ENCODE measurements at regions of chr15 and their contacts with region 1.

Region 1: DNA sequence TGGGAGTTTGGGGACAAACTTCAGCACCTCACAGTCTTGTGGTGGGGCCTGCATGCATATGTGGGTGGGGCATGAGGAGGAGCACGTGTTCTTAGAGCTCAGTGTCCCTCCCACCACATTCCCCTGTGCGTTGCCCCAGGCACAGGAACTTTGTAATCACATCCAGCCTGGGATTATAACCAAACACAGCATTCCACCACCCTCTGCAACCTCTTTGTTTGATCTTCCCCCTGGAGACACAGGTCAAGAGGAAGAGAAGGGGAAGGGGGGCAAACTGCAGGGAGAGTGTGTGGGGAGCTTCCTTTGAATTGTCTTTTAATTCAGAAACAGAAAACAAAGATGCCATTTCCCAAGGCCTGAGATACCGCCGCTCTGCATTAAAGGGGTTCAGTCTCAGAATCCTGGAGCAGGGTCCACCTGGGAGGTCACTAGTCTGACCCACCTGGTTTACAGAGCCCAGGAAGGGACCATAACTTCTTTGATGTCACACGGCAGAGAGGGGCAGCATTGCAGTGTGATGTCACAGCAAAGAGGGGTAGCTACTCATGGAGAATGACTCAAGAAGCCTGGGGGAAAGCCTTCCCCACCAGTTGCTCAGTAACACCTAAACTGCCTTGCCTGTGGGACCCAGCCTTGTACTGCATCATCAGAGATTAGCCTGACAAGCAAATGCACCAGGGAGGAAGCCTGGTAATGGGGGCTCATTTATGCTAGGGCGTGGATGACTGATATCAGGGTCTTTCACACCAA is 106.3 kb upstream of the RNU6-1 start:
- DNase-seq: peak; percentile 92 to 97
- H3K4me3 ChIP-seq: 0 out of 2 replicates have a peak overlapping the region, but pooled peaks have one; percentile 0
- H3K4me3 Mint-ChIP-seq: peak overlapping the region; percentile 83
- H3K27ac Mint-ChIP-seq: peak overlapping the region; percentile 99
- H3K4me1 ChIP-seq: peaks cover 58% of the 10 kb centered on the region
- H3K4me1 Mint-ChIP-seq: peaks cover 37% of the 10 kb centered on the region
- H3K27me3 ChIP-seq: no peaks in the 10 kb centered on the region
- H3K27me3 Mint-ChIP-seq: no peaks in the 10 kb centered on the region
- CTCF ChIP-seq: no peak

Region 2: DNA sequence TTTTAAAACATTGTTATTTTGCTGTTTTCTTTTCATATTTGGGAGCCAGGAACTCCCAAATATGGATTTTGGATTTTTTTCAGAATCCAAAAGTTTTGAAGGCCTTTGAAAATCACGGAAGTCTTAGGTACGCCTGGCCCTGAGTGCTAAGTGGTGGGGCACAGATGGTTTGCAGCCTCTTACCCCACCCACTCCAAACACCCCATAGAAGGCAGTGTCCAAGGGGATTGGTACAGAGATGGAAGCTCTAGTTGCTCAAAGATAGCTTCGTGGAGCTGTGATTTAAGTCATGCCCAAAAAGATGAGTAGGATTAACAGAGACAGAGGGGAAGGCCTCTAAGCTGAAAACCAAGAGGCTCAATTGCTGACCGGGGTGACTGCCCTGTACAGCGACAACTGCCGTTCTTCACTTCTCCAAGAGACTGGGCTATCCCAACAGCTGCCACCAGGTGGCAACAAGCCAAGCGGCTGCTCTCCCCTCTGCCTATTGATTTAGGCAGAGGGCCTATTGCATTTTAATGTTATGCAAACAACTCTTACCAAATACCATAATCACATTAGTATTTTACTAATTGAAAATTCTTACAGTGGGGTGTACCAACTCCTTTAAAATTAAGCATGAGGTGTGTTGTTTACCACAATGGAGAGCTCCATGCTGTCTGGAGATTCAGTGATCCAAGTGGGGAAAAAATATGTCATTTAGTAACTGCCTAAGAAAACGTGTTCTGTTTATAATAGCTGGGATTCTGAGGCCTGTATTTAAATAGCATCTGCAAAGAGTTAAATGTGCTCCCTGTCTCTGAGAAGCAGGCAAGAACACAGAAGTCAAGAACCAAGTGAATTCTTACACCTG is 489.2 kb before region 1 on chr15:
- CTCF ChIA-PET with region 1: no interaction called
- POLR2A ChIA-PET with region 1: no interaction called
- intact Hi-C with region 1: no loop called
- DNase-seq: peak; percentile 67 to 84
- H3K4me3 ChIP-seq: no peak overlapping the region
- H3K4me3 Mint-ChIP-seq: no peak overlapping the region
- H3K27ac Mint-ChIP-seq: no peak overlapping the region
- H3K4me1 ChIP-seq: no peaks in the 10 kb centered on the region
- H3K4me1 Mint-ChIP-seq: no peaks in the 10 kb centered on the region
- H3K27me3 ChIP-seq: no peaks in the 10 kb centered on the region
- H3K27me3 Mint-ChIP-seq: no peaks in the 10 kb centered on the region
- CTCF ChIP-seq: peak; percentile 80 to 89

Region 3: DNA sequence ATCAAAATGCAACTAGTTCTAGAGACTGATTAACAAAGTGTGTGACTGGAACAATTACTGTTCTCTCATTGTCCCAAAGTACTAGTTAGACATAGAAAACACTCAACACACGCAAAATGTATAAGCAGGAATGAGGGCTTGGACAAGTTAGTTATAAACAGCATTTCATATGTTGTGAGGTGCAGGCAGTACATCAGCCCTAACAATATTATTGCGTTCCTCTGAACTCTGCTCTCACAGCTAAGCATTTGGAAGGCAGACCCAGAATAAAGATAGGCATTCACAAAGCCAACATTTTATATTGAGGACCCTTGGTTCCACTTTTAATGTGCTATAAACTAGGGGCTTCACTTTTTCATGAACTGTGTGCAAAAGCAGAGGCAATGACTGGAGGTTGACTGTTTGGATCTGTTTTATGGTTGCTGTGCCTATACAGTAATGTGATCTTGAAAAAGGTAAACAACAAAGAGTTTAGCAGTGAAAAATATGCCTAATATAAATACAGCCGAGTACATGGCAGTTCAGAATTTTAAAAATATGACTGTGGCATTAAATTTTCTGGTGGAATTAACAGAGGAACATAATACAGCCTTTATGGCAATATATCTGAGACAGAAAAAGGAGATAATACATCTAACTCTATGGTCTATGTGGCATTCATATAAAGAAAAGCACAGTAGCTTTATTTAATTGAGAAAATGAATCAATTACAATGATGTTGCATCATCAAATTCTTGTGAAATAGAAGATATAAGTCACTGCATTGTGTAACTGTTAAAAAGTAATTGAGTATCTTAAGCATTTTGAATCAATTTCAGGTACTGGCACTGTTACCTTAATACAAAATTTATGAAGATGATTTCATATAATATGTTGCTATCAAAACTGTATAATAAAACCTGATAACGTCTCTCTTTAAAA is 200.8 kb before region 1 on chr15:
- CTCF ChIA-PET with region 1: no interaction called
- POLR2A ChIA-PET with region 1: no interaction called
- intact Hi-C with region 1: no loop called
- DNase-seq: no peak
- H3K4me3 ChIP-seq: no peak overlapping the region
- H3K4me3 Mint-ChIP-seq: no peak overlapping the region
- H3K27ac Mint-ChIP-seq: no peak overlapping the region
- H3K4me1 ChIP-seq: peaks cover 5% of the 10 kb centered on the region; the same call in 1 of the 2 replicates
- H3K4me1 Mint-ChIP-seq: peaks cover 7% of the 10 kb centered on the region
- H3K27me3 ChIP-seq: no peaks in the 10 kb centered on the region
- H3K27me3 Mint-ChIP-seq: no peaks in the 10 kb centered on the region
- CTCF ChIP-seq: no peak

Region 4: DNA sequence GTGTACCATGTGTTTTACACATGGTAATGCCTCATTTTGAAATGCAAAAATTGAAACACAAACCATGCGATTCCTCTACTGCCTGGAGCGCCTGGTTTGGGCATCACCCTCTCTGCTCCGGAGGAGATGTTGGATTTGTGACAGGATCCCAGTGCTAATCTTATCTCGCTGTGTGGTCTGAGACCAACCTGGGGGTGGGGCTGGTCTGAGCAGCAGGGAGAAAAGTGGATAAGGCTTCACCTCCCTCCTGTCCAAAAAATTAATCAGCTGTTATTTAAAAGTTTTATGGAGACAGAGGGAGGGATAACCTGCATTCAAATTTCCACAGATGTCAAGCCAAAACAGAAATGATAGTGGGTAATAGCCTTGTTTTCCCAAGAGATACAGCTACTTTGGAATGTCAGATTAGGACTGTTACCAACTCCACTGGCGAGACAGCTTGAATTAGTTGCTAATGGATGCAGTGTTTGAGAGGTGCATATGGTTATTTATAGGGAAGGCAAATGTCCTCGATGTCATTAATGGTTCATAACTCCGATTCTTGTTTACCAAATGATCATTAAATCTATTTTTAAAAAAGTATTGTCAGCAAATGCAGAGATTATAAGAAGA is 174.8 kb before region 1 on chr15:
- CTCF ChIA-PET with region 1: no interaction called
- POLR2A ChIA-PET with region 1: no interaction called
- intact Hi-C with region 1: no loop called
- DNase-seq: no peak
- H3K4me3 ChIP-seq: no peak overlapping the region
- H3K4me3 Mint-ChIP-seq: no peak overlapping the region
- H3K27ac Mint-ChIP-seq: no peak overlapping the region
- H3K4me1 ChIP-seq: no peaks in the 10 kb centered on the region
- H3K4me1 Mint-ChIP-seq: no peaks in the 10 kb centered on the region
- H3K27me3 ChIP-seq: no peaks in the 10 kb centered on the region
- H3K27me3 Mint-ChIP-seq: no peaks in the 10 kb centered on the region
- CTCF ChIP-seq: no peak

Region 5: DNA sequence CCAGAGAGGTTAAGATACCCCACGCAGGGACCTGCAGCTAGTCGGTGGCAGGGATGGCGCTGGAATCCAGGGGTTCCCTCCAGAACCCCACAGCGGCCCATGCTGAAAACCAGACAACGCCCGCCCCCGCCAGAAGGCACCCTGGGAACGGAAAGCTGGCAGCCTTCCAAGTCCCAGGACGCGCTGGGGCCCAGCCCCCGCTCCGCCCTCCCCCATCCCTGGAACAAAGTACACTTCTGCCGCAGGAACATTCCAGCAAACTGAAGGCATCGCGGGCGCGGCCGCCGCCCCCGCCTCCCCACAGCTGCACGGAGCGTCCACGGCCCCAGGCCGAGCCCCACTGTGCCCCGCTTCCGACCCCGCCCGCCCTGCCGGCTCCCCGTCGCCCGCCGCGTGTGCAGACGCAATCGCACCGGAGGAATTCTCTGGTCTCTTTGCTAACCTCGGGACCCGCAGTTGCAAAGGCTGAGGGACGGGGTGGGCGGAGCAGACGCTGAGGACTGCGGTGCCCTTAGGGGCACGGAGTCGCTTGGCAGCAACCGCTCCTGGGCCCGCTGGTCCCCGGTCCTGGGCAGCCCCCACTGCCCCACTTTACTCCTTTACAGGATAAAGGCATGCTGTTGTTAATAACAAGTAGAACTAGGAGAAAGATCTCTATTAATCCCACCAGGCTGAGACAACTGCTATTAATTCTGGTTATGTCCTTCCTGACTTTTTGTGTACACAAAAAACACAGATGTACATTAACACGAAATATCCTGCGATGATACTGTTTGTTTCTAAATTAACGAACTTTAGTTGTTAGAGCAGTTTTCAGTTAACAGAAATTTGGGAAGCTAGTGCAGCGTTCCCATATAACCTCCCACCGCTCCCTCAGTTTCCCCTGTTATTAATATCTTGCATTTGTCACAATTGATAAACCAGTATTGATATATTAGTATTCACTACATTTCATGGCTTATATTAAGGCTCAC is 61.3 kb before region 1 on chr15:
- CTCF ChIA-PET with region 1: no interaction called
- POLR2A ChIA-PET with region 1: interaction called, 8 read pairs
- intact Hi-C with region 1: loop called (anchors 1 kb)
- DNase-seq: peak; percentile 93 to 95
- H3K4me3 ChIP-seq: peak overlapping the region; percentile 32
- H3K4me3 Mint-ChIP-seq: peak overlapping the region; percentile 60
- H3K27ac Mint-ChIP-seq: peak overlapping the region; percentile 36
- H3K4me1 ChIP-seq: peaks cover 33% of the 10 kb centered on the region
- H3K4me1 Mint-ChIP-seq: peaks cover 35% of the 10 kb centered on the region
- H3K27me3 ChIP-seq: no peaks in the 10 kb centered on the region
- H3K27me3 Mint-ChIP-seq: no peaks in the 10 kb centered on the region
- CTCF ChIP-seq: peak in 1 of 2 experiments; percentile 12

Region 6: DNA sequence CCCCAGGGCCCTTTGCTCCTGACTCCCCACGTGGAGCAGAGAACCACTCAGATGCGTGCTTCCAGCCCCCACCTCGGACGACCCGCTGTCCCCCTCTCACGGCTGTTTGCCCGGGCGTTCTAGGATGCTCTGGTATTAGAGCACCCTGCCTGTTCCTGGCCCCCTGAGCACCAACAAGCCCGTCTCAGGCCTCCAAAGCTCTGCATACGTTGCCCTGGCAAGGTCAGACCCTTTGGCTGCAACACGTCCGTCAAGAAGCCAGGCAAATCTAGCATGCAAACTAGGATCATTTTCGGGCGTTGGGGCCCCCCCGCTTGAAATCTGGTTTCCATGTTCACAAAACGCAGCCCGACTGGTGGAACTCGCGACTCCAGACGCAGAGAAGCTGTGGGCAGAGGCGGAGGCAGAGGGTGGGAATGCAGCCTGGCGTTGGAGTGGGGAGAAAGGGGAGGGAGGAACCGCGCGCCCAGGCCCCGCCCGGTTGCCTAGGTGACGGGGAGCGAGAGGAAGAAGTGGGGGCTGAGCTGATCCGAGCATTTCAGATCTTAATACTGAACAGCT is 21.8 kb after region 1 on chr15:
- CTCF ChIA-PET with region 1: interaction called, 3 read pairs
- POLR2A ChIA-PET with region 1: interaction called, 11 read pairs
- intact Hi-C with region 1: no loop called
- DNase-seq: peak; percentile 75 to 82
- H3K4me3 ChIP-seq: peak overlapping the region; percentile 39
- H3K4me3 Mint-ChIP-seq: peak overlapping the region; percentile 75
- H3K27ac Mint-ChIP-seq: peak overlapping the region; percentile 85
- H3K4me1 ChIP-seq: peaks cover 21% of the 10 kb centered on the region
- H3K4me1 Mint-ChIP-seq: peaks cover 20% of the 10 kb centered on the region
- H3K27me3 ChIP-seq: no peaks in the 10 kb centered on the region
- H3K27me3 Mint-ChIP-seq: no peaks in the 10 kb centered on the region
- CTCF ChIP-seq: no peak

Region 7: GRCh38 chr15:68025835-68026424 is 79.8 kb after region 1 on chr15:
- CTCF ChIA-PET with region 1: no interaction called
- POLR2A ChIA-PET with region 1: no interaction called
- intact Hi-C with region 1: loop called (anchors 2 kb)
- DNase-seq: peak; percentile 62 to 65
- H3K4me3 ChIP-seq: no peak overlapping the region
- H3K4me3 Mint-ChIP-seq: peak overlapping the region; percentile 54
- H3K27ac Mint-ChIP-seq: peak overlapping the region; percentile 92
- H3K4me1 ChIP-seq: peaks cover 52% of the 10 kb centered on the region
- H3K4me1 Mint-ChIP-seq: peaks cover 39% of the 10 kb centered on the region
- H3K27me3 ChIP-seq: no peaks in the 10 kb centered on the region
- H3K27me3 Mint-ChIP-seq: no peaks in the 10 kb centered on the region
- CTCF ChIP-seq: no peak

Region 8: GRCh38 chr15:68154923-68155559 is 208.9 kb after region 1 on chr15:
- CTCF ChIA-PET with region 1: interaction called, 11 read pairs
- POLR2A ChIA-PET with region 1: no interaction called
- intact Hi-C with region 1: no loop called
- DNase-seq: peak in 1 of 2 experiments; percentile 61
- H3K4me3 ChIP-seq: no peak overlapping the region
- H3K4me3 Mint-ChIP-seq: no peak overlapping the region
- H3K27ac Mint-ChIP-seq: no peak overlapping the region
- H3K4me1 ChIP-seq: peaks cover 12% of the 10 kb centered on the region
- H3K4me1 Mint-ChIP-seq: peaks cover 8% of the 10 kb centered on the region
- H3K27me3 ChIP-seq: no peaks in the 10 kb centered on the region
- H3K27me3 Mint-ChIP-seq: no peaks in the 10 kb centered on the region
- CTCF ChIP-seq: peak; percentile 65 to 72